Activated B cell treated with CpG ODN at 0.5 μM for 24 hours (primary cell): ENCODE measurements at regions of chr2 and their contacts with region 1.

Region 1: DNA sequence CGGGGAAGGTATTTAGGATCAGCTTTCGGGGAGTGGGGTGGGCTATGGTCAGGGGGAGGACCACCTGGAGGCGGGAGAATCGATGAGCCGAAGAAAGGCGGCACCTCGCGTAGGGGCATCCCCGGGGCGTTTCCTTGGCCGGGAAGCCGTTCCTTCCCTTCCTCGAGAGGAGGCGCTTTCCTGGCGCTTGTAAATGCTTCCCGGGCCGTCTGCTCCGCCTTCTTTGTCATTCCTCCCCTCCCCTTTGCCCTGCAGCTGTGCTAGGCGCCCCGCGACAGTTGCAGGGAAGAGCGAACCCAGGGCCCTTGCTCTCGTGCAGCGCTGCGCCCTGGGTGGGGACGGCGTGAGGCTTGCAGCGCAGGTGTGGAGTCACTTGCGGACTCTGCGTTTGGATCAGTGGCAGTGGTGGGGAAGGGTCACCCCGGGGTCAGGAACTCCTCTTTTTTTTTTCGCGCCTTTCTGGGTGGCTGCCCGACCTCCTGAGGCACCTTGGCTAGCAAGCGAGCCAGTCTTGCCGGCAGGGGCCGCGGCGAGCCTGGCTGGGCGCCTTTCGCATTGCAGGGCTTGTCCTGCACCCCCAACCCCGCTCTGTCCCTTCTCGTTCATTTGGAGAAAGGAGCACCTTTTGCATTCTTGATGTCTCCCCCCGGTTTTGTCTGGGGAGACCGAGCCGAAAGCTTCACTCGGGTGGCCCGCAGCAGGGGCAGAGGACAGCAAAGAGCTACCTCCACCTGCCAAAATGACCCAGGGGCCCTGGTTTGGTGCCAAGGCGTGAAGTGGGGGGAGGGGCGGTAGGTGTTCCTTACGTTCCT is 840 bp downstream of the KCNS3 start:
- DNase-seq: peak; percentile 30
- ATAC-seq: peak; percentile 29
- H3K4me3 Mint-ChIP-seq: peak overlapping the region; percentile 88
- H3K27ac Mint-ChIP-seq: no peak overlapping the region
- H3K4me1 Mint-ChIP-seq: peaks cover 27% of the 10 kb centered on the region
- H3K27me3 Mint-ChIP-seq: peaks cover 49% of the 10 kb centered on the region
- CTCF ChIP-seq: no peak

Region 2: DNA sequence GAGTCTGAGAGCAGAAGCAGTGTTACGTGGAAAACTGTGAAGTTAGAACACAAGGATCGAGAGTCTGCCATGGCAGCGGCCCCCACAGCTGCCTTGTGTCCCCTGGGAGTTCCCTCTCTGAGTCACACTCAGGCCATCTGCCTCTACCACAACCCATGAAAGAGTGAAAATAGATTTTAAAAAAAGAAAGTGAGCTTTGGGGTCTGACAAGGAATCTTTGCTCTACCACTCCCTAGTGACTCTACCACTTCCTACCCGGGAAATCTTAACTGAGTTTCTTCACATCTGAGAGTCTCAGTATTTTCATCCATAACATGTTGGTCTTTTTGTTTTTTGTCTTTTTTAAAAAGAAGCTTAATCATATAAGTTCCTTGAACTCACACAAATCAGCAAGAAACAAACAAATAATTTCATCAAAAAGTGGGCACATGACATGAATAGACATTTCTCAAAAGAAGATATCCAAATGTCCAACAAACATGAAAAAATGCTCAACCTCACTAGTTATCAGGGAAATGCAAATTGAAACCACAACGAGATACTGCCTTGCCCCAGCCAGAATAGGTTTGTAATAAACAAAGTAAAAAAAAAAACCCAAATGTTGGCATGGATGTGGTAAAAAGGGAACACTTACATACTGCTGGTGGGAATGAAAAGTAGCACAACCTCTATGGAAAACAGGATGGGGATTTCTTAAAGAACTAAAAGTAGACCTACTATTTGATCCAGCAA is 65.4 kb before region 1 on chr2:
- CTCF ChIA-PET with region 1: no interaction called
- POLR2A ChIA-PET with region 1: no interaction called
- intact Hi-C with region 1: no loop called
- DNase-seq: peak; percentile 56
- ATAC-seq: peak; percentile 82
- H3K4me3 Mint-ChIP-seq: peak overlapping the region; percentile 81
- H3K27ac Mint-ChIP-seq: peak overlapping the region; percentile 97
- H3K4me1 Mint-ChIP-seq: peaks cover 81% of the 10 kb centered on the region
- H3K27me3 Mint-ChIP-seq: no peaks in the 10 kb centered on the region
- CTCF ChIP-seq: no peak

Region 3: DNA sequence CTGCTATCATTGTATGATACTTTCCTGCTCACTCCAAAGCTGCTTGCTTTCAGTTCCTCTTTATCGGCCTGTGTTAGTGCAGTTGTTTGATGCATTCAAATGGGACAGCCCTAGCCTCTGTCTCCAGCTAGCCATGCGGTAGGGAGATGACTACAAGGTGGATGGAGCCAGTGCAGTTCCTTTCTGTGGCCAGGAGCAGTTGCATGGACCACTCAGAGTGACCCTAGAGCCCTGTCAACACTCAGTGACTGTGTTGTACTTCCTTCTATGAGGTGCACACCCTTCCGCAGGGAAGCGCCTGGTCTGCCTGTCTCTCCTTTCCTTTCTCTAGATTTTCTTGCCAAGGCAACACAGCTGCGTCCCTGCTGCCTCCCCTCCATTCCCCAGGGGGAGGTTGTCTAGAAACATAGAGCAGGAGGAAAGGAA is 33.0 kb after region 1 on chr2:
- CTCF ChIA-PET with region 1: no interaction called
- POLR2A ChIA-PET with region 1: no interaction called
- intact Hi-C with region 1: loop called (anchors 5 kb)
- DNase-seq: no peak
- ATAC-seq: peak; percentile 80
- H3K4me3 Mint-ChIP-seq: no peak overlapping the region
- H3K27ac Mint-ChIP-seq: no peak overlapping the region
- H3K4me1 Mint-ChIP-seq: peaks cover 7% of the 10 kb centered on the region
- H3K27me3 Mint-ChIP-seq: peaks cover 17% of the 10 kb centered on the region
- CTCF ChIP-seq: no peak